ENCODE measurements at regions of chr6 and their contacts with region 1.

Region 1: GRCh38 chr6:32244946-32245398 is 21.1 kb upstream of the NOTCH4 start:
- DNase-seq: peak; percentile 63
- ATAC-seq: peak; percentile 97
- H3K4me3 ChIP-seq: no peak overlapping the region
- H3K27ac ChIP-seq: no peak overlapping the region
- H3K4me1 ChIP-seq: no peaks in the 10 kb centered on the region
- H3K27me3 ChIP-seq: peaks cover 9% of the 10 kb centered on the region
- CTCF ChIP-seq: peak; percentile 80
- POLR2A ChIP-seq: no peak
- RAD21 ChIP-seq: peak; percentile 71

Region 2: GRCh38 chr6:32195652-32195901 is 49.4 kb before region 1 on chr6:
- CTCF ChIA-PET with region 1: interaction called, 4 read pairs
- POLR2A ChIA-PET with region 1: no interaction called
- dilution Hi-C with region 1: no loop called
- in situ Hi-C with region 1: no loop called
- intact Hi-C with region 1: loop called (anchors 2 kb)
- DNase-seq: peak; percentile 99
- ATAC-seq: peak; percentile 92
- H3K4me3 ChIP-seq: no peak overlapping the region
- H3K27ac ChIP-seq: no peak overlapping the region
- H3K4me1 ChIP-seq: peaks cover 15% of the 10 kb centered on the region
- H3K27me3 ChIP-seq: no peaks in the 10 kb centered on the region
- CTCF ChIP-seq: peak; percentile 49
- POLR2A ChIP-seq: no peak
- RAD21 ChIP-seq: no peak

Region 3: DNA sequence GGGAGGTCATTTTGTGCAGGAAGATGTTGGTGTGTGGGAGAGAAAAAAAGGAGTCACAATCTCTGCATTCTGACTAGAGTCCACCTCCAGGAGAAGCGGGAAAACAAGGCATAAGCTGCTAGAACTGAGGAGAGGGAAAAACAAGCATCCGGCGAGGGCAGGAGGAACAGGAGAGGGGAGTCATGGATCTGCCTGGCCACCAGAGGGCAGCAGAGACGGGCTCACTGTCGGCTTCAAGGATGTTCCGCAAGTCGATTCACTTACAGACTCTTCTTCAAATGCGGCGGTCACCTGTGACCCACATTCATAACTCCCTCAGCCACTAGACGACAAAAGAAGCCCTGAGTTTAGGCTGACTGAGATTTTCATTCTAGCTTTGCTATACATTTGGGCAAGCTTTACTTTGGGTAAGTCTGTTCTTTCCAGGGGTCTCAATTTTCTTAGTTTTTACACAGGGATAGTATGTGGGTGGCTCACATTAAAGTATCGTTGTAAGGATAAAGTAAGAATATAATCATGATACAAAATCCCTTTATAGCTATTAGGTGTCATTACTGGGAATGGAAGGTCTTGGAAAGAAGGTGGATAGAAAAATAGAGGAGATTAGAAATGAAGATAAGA is 168.6 kb after region 1 on chr6:
- CTCF ChIA-PET with region 1: interaction called, 9 read pairs
- POLR2A ChIA-PET with region 1: no interaction called
- dilution Hi-C with region 1: no loop called
- in situ Hi-C with region 1: loop called (anchors 5 kb)
- intact Hi-C with region 1: loop called (anchors 1 kb)
- DNase-seq: peak; percentile 69
- ATAC-seq: peak; percentile 93
- H3K4me3 ChIP-seq: no peak overlapping the region
- H3K27ac ChIP-seq: no peak overlapping the region
- H3K4me1 ChIP-seq: no peaks in the 10 kb centered on the region
- H3K27me3 ChIP-seq: peaks cover 24% of the 10 kb centered on the region
- CTCF ChIP-seq: peak; percentile 83
- POLR2A ChIP-seq: no peak
- RAD21 ChIP-seq: peak; percentile 72

Region 4: GRCh38 chr6:32700391-32701040 is 455.5 kb after region 1 on chr6:
- CTCF ChIA-PET with region 1: interaction called, 3 read pairs
- POLR2A ChIA-PET with region 1: no interaction called
- dilution Hi-C with region 1: no loop called
- in situ Hi-C with region 1: loop called (anchors 10 kb)
- intact Hi-C with region 1: loop called (anchors 2 kb)
- DNase-seq: peak; percentile 59
- ATAC-seq: peak; percentile 93
- H3K4me3 ChIP-seq: no peak overlapping the region
- H3K27ac ChIP-seq: no peak overlapping the region
- H3K4me1 ChIP-seq: no peaks in the 10 kb centered on the region
- H3K27me3 ChIP-seq: peaks cover 2% of the 10 kb centered on the region
- CTCF ChIP-seq: peak; percentile 55
- POLR2A ChIP-seq: no peak
- RAD21 ChIP-seq: peak; percentile 54

Region 5: GRCh38 chr6:32796848-32797776 is 552.1 kb after region 1 on chr6:
- CTCF ChIA-PET with region 1: no interaction called
- POLR2A ChIA-PET with region 1: no interaction called
- dilution Hi-C with region 1: no loop called
- in situ Hi-C with region 1: loop called (anchors 10 kb)
- intact Hi-C with region 1: no loop called
- DNase-seq: peak; percentile 58
- ATAC-seq: peak; percentile 95
- H3K4me3 ChIP-seq: peak overlapping the region; percentile 10
- H3K27ac ChIP-seq: no peak overlapping the region
- H3K4me1 ChIP-seq: no peaks in the 10 kb centered on the region
- H3K27me3 ChIP-seq: peaks cover 20% of the 10 kb centered on the region
- CTCF ChIP-seq: peak; percentile 86
- POLR2A ChIP-seq: no peak
- RAD21 ChIP-seq: peak; percentile 66